ENCODE measurements at regions of chr11 and their contacts with region 1.

Region 1: GRCh38 chr11:22787551-22788162 is 41.9 kb downstream of the SVIP start:
- DNase-seq: peak in 7 of 9 donors; percentile 20 to 54 (median 39)
- ATAC-seq: peak; percentile 61
- H3K4me3 ChIP-seq: no peak overlapping the region
- H3K4me3 Mint-ChIP-seq: no peak overlapping the region
- H3K27ac ChIP-seq: no peak overlapping the region
- H3K27ac Mint-ChIP-seq: no peak overlapping the region
- H3K4me1 ChIP-seq: no peaks in the 10 kb centered on the region
- H3K4me1 Mint-ChIP-seq: peaks cover 0 to 1% (median 0%) of the 10 kb centered on the region in 7 donors
- H3K27me3 ChIP-seq: no peaks in the 10 kb centered on the region
- H3K27me3 Mint-ChIP-seq: peaks cover 0 to 5% (median 3%) of the 10 kb centered on the region in 5 donors

Region 2: DNA sequence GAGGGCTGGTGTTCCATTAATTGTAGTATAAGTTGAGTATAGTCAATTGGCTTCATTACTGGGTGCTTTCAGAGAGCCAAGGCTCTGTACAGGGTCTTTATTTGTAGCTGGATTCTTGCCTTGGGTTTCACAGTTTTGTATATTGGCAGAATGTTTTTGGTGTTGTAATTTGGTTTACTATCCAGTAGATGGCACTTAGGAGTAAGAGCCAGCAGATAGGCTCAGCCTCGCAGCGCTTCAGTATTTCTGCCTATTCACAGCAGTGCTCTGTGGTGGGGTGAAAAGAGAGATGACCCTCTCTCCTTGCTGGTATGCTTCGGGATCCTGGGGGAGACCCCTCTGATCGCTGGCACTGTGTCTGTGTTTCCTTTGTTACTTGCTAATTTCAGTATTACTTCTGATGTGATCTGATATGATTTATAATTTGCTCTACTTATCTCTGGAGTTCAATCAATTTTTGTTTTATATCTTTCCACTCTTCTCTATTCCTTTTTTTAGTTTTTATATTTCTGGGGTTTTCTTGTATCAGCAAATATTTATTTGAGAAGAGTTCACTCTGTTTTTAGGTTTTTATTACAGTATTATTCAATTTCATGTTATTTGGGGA is 542.6 kb before region 1 on chr11:
- CTCF ChIA-PET with region 1: interaction called, 4 read pairs
- POLR2A ChIA-PET with region 1: no interaction called
- intact Hi-C with region 1: loop called (anchors 1 to 2 kb)
- DNase-seq: peak in 5 of 9 donors; percentile 6 to 30 (median 13)
- ATAC-seq: peak; percentile 65
- H3K4me3 ChIP-seq: no peak overlapping the region
- H3K4me3 Mint-ChIP-seq: no peak overlapping the region
- H3K27ac ChIP-seq: no peak overlapping the region
- H3K27ac Mint-ChIP-seq: no peak overlapping the region
- H3K4me1 ChIP-seq: no peaks in the 10 kb centered on the region
- H3K4me1 Mint-ChIP-seq: no peaks in the 10 kb centered on the region
- H3K27me3 ChIP-seq: no peaks in the 10 kb centered on the region
- H3K27me3 Mint-ChIP-seq: peaks cover 2 to 36% (median 21%) of the 10 kb centered on the region in 5 donors

Region 3: DNA sequence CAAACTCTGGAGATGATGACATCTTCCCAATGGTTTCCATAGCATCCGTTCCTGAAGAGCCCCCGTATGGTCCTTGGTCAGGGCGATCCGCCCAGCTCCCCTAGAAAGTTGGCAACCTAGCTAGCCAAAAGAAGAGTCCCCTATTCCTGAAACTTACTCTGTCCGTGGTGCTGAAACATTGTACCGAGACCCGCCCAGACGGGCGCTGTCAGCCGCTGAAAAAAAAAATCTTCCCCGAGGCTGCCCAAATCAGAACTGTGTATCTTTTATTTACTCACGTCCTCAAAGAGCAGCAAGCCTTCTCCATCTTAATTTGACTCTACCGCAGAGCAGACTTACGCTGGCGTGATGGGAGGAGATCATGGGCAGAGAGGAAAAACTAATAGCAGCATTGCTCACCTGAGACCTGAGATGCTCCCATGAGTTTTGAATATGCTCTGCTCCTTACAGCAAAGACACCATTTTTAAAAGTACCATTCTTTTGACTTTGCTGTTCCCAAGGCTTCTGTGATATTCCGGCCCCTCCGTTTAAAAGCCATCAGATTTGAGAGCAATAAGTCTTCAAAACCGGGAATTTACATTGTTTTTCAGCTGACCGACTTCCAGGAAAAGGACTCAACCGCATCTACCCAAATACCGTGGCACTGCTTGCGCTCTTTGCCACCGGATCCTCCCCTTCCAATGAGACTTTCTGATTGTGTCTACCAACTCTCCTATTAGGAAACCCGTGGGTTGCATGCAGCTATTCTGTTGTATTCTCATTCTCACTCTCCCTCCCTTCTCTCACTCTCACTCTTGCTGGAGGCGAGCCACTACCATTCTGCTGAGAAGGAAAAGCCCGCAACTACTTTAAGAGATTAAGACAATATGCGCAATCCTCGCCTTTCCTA is 449.8 kb before region 1 on chr11 and contains the start of gene SLC17A6:
- CTCF ChIA-PET with region 1: interaction called, 4 read pairs
- POLR2A ChIA-PET with region 1: no interaction called
- intact Hi-C with region 1: loop called (anchors 1 kb)
- DNase-seq: peak in 2 of 9 donors; percentile 12 to 31
- ATAC-seq: no peak
- H3K4me3 ChIP-seq: no peak within 1 kb of the TSS
- H3K4me3 Mint-ChIP-seq: no peak within 1 kb of the TSS
- H3K27ac ChIP-seq: no peak within 1 kb of the TSS
- H3K27ac Mint-ChIP-seq: no peak within 1 kb of the TSS
- H3K4me1 ChIP-seq: peaks cover 0 to 3% of the 10 kb centered on the region in 2 donors
- H3K4me1 Mint-ChIP-seq: peaks cover 7 to 21% (median 12%) of the 10 kb centered on the region in 7 donors
- H3K27me3 ChIP-seq: peaks cover 4 to 15% of the 10 kb centered on the region in 2 donors
- H3K27me3 Mint-ChIP-seq: peaks cover 55 to 73% (median 61%) of the 10 kb centered on the region in 5 donors
- total RNA-seq, gene SLC17A6: not detected

Region 4: GRCh38 chr11:22479208-22479607 is 308.4 kb before region 1 on chr11:
- CTCF ChIA-PET with region 1: no interaction called
- POLR2A ChIA-PET with region 1: no interaction called
- intact Hi-C with region 1: no loop called
- DNase-seq: no peak
- ATAC-seq: no peak
- H3K4me3 ChIP-seq: no peak overlapping the region
- H3K4me3 Mint-ChIP-seq: no peak overlapping the region
- H3K27ac ChIP-seq: no peak overlapping the region
- H3K27ac Mint-ChIP-seq: no peak overlapping the region
- H3K4me1 ChIP-seq: no peaks in the 10 kb centered on the region
- H3K4me1 Mint-ChIP-seq: no peaks in the 10 kb centered on the region
- H3K27me3 ChIP-seq: no peaks in the 10 kb centered on the region
- H3K27me3 Mint-ChIP-seq: peaks cover 0 to 35% (median 14%) of the 10 kb centered on the region in 5 donors

Region 5: GRCh38 chr11:22666688-22667439 is 120.8 kb before region 1 on chr11:
- CTCF ChIA-PET with region 1: interaction called, 12 read pairs
- POLR2A ChIA-PET with region 1: no interaction called
- intact Hi-C with region 1: loop called (anchors 1 to 2 kb)
- DNase-seq: peak in 4 of 9 donors; percentile 11 to 32 (median 20)
- ATAC-seq: peak; percentile 31
- H3K4me3 ChIP-seq: no peak overlapping the region
- H3K4me3 Mint-ChIP-seq: peak overlapping the region; percentile 49 to 94 (median 73)
- H3K27ac ChIP-seq: no peak overlapping the region
- H3K27ac Mint-ChIP-seq: peak overlapping the region in 1 of 9 donors; percentile 54
- H3K4me1 ChIP-seq: peaks cover 0 to 5% of the 10 kb centered on the region in 2 donors
- H3K4me1 Mint-ChIP-seq: peaks cover 9 to 24% (median 13%) of the 10 kb centered on the region in 7 donors
- H3K27me3 ChIP-seq: peaks cover 5 to 7% of the 10 kb centered on the region in 2 donors
- H3K27me3 Mint-ChIP-seq: peaks cover 60 to 67% (median 66%) of the 10 kb centered on the region in 5 donors

Region 6: DNA sequence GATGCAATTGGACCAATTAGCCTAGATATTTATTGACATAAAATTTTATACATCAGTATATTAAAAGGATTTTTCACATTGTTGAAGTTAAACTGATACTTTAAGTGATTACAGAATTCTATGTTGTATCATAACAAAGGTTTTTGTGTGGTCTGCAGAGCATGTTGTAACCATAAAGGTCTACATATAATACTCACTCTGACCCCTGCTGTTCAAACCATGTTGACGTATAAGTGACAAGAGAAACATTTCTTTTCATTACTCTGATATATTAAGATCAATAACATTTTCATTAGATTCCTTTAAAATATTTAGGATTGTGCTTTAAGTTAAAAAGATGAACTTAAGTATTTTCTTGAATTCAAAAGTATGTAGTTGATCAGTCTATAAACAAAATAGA is 57.3 kb before region 1 on chr11:
- CTCF ChIA-PET with region 1: interaction called, 3 read pairs
- POLR2A ChIA-PET with region 1: no interaction called
- intact Hi-C with region 1: loop called in 1 of 2 experiments (anchors 1 kb)
- DNase-seq: peak in 6 of 9 donors; percentile 17 to 50 (median 22)
- ATAC-seq: peak; percentile 41
- H3K4me3 ChIP-seq: no peak overlapping the region
- H3K4me3 Mint-ChIP-seq: no peak overlapping the region
- H3K27ac ChIP-seq: no peak overlapping the region
- H3K27ac Mint-ChIP-seq: no peak overlapping the region
- H3K4me1 ChIP-seq: no peaks in the 10 kb centered on the region
- H3K4me1 Mint-ChIP-seq: no peaks in the 10 kb centered on the region
- H3K27me3 ChIP-seq: no peaks in the 10 kb centered on the region
- H3K27me3 Mint-ChIP-seq: peaks cover 0 to 3% (median 0%) of the 10 kb centered on the region in 5 donors

Region 7: DNA sequence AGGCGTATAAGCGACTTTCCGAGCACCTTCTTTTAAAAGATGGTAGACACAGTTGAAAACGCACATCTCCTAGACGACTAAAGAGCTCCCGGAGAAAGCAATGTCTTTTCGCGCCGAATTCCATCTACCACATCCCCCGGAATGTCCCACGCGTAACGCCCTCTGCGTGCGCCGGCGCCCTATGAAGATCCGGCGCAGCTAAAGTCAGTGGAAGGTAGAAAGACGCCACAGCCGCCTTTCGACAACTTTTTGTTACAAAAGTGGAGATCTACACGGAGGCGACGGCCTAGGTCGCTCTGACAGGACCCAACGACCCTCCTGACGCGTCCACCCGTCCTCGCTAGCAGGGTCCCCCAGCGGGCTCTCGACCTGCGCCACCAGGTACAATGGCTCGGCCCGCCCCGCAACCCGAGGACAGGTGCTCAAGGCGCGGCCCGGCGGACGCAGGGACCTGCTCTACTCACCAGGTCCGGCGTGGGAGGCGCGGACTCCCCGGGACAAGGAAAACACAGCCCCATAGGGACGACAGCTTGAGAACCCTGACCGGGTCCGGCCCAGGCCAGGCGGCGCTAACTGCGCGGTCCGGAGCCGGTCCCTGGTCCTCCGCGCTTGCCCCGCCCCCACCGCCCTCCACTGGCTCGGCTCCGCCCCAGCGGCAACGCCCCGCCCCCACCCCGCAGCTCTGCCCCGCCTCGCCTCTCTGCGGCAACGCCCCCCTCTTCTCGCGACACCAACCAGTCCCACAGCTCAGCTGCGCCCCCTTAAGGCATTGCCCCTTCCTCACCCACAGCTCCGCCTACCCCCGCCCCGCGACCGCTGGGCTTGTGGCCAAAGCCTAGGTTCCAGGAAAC is 41.8 kb after region 1 on chr11 and contains the start of gene SVIP:
- CTCF ChIA-PET with region 1: no interaction called
- POLR2A ChIA-PET with region 1: no interaction called
- intact Hi-C with region 1: loop called in 1 of 2 experiments (anchors 2 kb)
- DNase-seq: peak; percentile 82 to 92 (median 89)
- ATAC-seq: peak; percentile 98
- H3K4me3 ChIP-seq: peak within 1 kb of the TSS; percentile 88
- H3K4me3 Mint-ChIP-seq: peak within 1 kb of the TSS; percentile 85 to 96 (median 94)
- H3K27ac ChIP-seq: peak within 1 kb of the TSS; percentile 87
- H3K27ac Mint-ChIP-seq: peak within 1 kb of the TSS; percentile 87 to 97 (median 93)
- H3K4me1 ChIP-seq: peaks cover 12 to 16% of the 10 kb centered on the region in 2 donors
- H3K4me1 Mint-ChIP-seq: peaks cover 7 to 22% (median 18%) of the 10 kb centered on the region in 7 donors
- H3K27me3 ChIP-seq: no peaks in the 10 kb centered on the region
- H3K27me3 Mint-ChIP-seq: no peaks in the 10 kb centered on the region
- total RNA-seq, gene SVIP: 33.4 to 70.6 (median 49.2) TPM

Region 8: GRCh38 chr11:23166376-23166775 is 378.7 kb after region 1 on chr11:
- CTCF ChIA-PET with region 1: no interaction called
- POLR2A ChIA-PET with region 1: no interaction called
- intact Hi-C with region 1: no loop called
- DNase-seq: no peak
- ATAC-seq: no peak
- H3K4me3 ChIP-seq: no peak overlapping the region
- H3K4me3 Mint-ChIP-seq: no peak overlapping the region
- H3K27ac ChIP-seq: no peak overlapping the region
- H3K27ac Mint-ChIP-seq: no peak overlapping the region
- H3K4me1 ChIP-seq: no peaks in the 10 kb centered on the region
- H3K4me1 Mint-ChIP-seq: no peaks in the 10 kb centered on the region
- H3K27me3 ChIP-seq: no peaks in the 10 kb centered on the region
- H3K27me3 Mint-ChIP-seq: no peaks in the 10 kb centered on the region